Activated B cell treated with CpG ODN at 0.5 μM for 24 hours (primary cell): ENCODE measurements at regions of chr3 and their contacts with region 1.

Region 1: DNA sequence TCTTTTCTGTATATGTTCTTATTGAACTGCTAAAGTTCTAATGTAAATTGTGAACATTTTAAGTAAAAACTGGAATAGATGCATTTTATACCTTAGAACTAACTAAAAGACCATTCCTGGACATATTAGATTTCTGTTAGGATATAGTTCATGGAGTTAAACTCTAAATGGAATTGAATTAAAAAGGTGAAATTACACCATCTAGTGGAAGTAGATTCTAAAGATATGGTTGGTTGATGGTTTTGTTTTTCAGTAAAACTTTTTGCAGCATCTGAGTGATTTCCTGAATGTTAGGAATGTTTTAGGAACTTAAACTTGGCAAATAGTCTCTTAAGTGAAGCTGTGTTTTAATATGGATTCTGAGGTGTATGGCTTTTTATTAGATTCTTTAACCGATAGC is 96.8 kb downstream of the SLMAP start:
- DNase-seq: no peak
- ATAC-seq: no peak
- H3K4me3 Mint-ChIP-seq: no peak overlapping the region
- H3K27ac Mint-ChIP-seq: no peak overlapping the region
- H3K4me1 Mint-ChIP-seq: no peaks in the 10 kb centered on the region
- H3K27me3 Mint-ChIP-seq: no peaks in the 10 kb centered on the region
- CTCF ChIP-seq: no peak

Region 2: DNA sequence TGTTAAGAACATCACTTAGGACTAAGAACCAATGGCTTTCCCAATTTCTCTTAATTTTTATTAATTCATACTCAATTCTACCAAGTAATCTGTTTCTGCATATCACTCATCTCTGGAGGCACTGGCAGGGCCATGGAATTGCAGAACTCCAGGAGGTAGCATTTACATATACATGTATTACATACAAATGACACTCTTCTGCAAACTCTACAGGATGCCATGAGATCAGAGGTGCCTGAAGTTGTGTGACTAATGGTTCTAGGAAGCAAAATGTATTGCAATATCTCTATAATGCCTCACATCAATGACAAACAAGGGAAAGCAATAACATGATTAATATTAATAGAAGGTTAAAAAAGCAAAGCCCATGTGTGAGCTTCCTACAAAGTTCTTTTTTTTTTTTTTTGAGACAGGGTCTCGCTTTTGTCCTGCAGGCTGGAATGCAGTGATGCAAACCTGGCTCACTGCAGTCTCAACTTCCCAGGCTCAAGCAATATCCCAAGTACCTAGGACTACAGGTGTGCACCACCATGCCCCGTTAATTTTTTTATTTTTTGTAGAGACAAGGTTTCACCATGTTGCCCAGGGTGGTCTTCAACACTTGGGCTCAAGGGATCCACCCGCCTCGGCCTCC is 193.0 kb before region 1 on chr3:
- CTCF ChIA-PET with region 1: no interaction called
- POLR2A ChIA-PET with region 1: interaction called, 4 read pairs
- intact Hi-C with region 1: loop called (anchors 10 kb)
- DNase-seq: no peak
- ATAC-seq: no peak
- H3K4me3 Mint-ChIP-seq: no peak overlapping the region
- H3K27ac Mint-ChIP-seq: no peak overlapping the region
- H3K4me1 Mint-ChIP-seq: no peaks in the 10 kb centered on the region
- H3K27me3 Mint-ChIP-seq: no peaks in the 10 kb centered on the region
- CTCF ChIP-seq: no peak